Dorsolateral prefrontal cortex (tissue), 120 donors: ENCODE measurements at regions of chr2 and their contacts with region 1.

Region 1: GRCh38 chr2:99631700-99632099 is 141.9 kb upstream of the REV1 start:
- DNase-seq: no peak
- H3K4me3 ChIP-seq: no peak overlapping the region
- H3K27ac ChIP-seq: no peak overlapping the region
- H3K27me3 ChIP-seq: no peaks in the 10 kb centered on the region
- CTCF ChIP-seq: no peak

Region 2: GRCh38 chr2:99573634-99574470 is 57.8 kb before region 1 on chr2:
- intact Hi-C with region 1: loop called in 1 of 2 experiments (anchors 2 kb)
- DNase-seq: peak in 2 of 10 donors; percentile 37 to 86
- H3K4me3 ChIP-seq: no peak overlapping the region
- H3K27ac ChIP-seq: peak overlapping the region in 47 of 59 donors; percentile 4 to 86 (median 63)
- H3K27me3 ChIP-seq: no peaks in the 10 kb centered on the region
- CTCF ChIP-seq: no peak

Region 3: GRCh38 chr2:100070078-100070477 is 438.4 kb after region 1 on chr2:
- intact Hi-C with region 1: no loop called
- DNase-seq: no peak
- H3K4me3 ChIP-seq: no peak overlapping the region
- H3K27ac ChIP-seq: no peak overlapping the region
- H3K27me3 ChIP-seq: peaks cover 0 to 2% (median 0%) of the 10 kb centered on the region in 45 donors
- CTCF ChIP-seq: no peak